Left cardiac atrium (tissue), 4 donors: ENCODE measurements at regions of chr17 and their contacts with region 1.

Region 1: GRCh38 chr17:57892146-57892828 is 42.4 kb upstream of the MRPS23 start:
- DNase-seq: peak; percentile 90
- ATAC-seq: peak; percentile 58 to 64

Region 2: GRCh38 chr17:57849874-57850754 is 42.2 kb before region 1 on chr17 and contains the start of gene MRPS23:
- intact Hi-C with region 1: loop called in 1 of 2 experiments (anchors 5 kb)
- DNase-seq: peak; percentile 99
- ATAC-seq: peak; percentile 91 to 92
- total RNA-seq, gene MRPS23: 45.2 to 55.8 TPM

Region 3: DNA sequence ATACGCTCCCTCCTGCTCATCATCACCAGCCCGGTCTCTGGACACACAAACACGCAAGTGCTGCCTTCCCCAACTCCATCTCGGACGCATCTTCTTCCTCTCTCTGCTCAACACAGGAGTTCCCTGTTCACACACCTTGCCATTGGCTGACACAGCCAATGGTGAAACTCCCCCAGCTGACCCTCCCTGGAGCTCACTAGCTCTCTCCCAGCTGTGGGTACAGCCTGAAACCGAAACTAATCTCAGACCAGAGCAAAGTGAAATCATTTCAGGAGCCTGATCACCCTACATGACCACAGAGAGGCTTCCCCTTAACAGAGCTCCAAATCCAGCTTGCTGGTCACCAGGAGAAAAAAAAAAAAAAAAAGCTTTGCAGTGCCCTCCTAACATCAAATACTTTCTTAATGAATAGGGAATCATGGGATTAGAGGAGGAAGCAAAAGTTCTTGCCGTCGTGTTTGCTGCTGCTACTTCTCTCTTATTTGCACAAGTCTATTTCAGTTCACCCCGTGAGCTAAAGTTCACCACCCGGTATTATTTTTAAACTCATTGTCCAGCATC is 54.6 kb after region 1 on chr17:
- intact Hi-C with region 1: loop called in 1 of 2 experiments (anchors 5 kb)
- DNase-seq: no peak
- ATAC-seq: peak; percentile 64 to 76

Region 4: GRCh38 chr17:57987580-57988421 is 95.5 kb after region 1 on chr17 and contains the start of gene VEZF1:
- intact Hi-C with region 1: loop called in 1 of 2 experiments (anchors 2 kb)
- DNase-seq: peak; percentile 88
- ATAC-seq: peak; percentile 75 to 81
- total RNA-seq, gene VEZF1: 54.1 to 60.9 TPM

Region 5: GRCh38 chr17:58531661-58532554 is 639.6 kb after region 1 on chr17:
- intact Hi-C with region 1: no loop called
- DNase-seq: peak; percentile 67
- ATAC-seq: peak; percentile 90